Activated T-helper 1 cell treated with anti-CD3 and anti-CD28 coated beads, Interleukin-12 subunit alpha, Interleukin-12 subunit beta, Interleukin-2, Interleukin-4 antibody, amounts not matched to agents 30 ng/mL and 10 ng/mL and 1 ng/mL, durations not matched to agents 14 hours and 24 hours and 36 hours (primary cell): ENCODE measurements at regions of chr3 and their contacts with region 1.

Region 1: GRCh38 chr3:122258757-122259371 is 66.2 kb upstream of the CSTA start:
- DNase-seq: peak; percentile 47
- H3K4me3 Mint-ChIP-seq: no peak overlapping the region
- H3K27ac Mint-ChIP-seq: peak overlapping the region; percentile 35
- H3K4me1 Mint-ChIP-seq: peaks cover 22% of the 10 kb centered on the region
- H3K27me3 Mint-ChIP-seq: peaks cover 17% of the 10 kb centered on the region

Region 2: GRCh38 chr3:121654493-121655385 is 604.1 kb before region 1 on chr3:
- intact Hi-C with region 1: loop called (anchors 5 kb)
- DNase-seq: peak; percentile 9
- H3K4me3 Mint-ChIP-seq: peak overlapping the region; percentile 50
- H3K27ac Mint-ChIP-seq: peak overlapping the region; percentile 79
- H3K4me1 Mint-ChIP-seq: peaks cover 87% of the 10 kb centered on the region
- H3K27me3 Mint-ChIP-seq: no peaks in the 10 kb centered on the region

Region 3: GRCh38 chr3:121883507-121883906 is 375.4 kb before region 1 on chr3:
- intact Hi-C with region 1: loop called (anchors 1 kb)
- DNase-seq: no peak
- H3K4me3 Mint-ChIP-seq: no peak overlapping the region
- H3K27ac Mint-ChIP-seq: no peak overlapping the region
- H3K4me1 Mint-ChIP-seq: no peaks in the 10 kb centered on the region
- H3K27me3 Mint-ChIP-seq: no peaks in the 10 kb centered on the region

Region 4: GRCh38 chr3:122014741-122015140 is 244.1 kb before region 1 on chr3:
- intact Hi-C with region 1: loop called (anchors 5 kb)
- DNase-seq: no peak
- H3K4me3 Mint-ChIP-seq: no peak overlapping the region
- H3K27ac Mint-ChIP-seq: peak overlapping the region; percentile 21
- H3K4me1 Mint-ChIP-seq: peaks cover 40% of the 10 kb centered on the region
- H3K27me3 Mint-ChIP-seq: peaks cover 12% of the 10 kb centered on the region

Region 5: DNA sequence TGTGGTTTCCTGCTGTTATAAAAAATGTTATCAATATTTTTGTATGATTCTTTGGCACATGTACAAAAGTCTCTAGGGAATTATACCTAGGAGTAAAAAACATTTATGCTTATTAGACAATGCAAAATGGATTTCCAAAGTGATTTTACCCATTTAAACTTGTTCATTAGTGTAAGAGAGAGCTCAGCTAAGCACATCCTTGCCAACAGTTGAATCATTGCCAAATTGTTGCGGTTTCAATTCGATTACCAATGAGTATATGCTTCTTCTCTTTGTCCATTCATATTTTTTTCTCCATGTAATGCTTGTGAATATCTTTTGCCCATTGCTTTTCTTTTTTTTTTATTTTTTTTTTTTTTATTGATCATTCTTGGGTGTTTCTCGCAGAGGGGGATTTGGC is 58.2 kb before region 1 on chr3:
- intact Hi-C with region 1: no loop called
- DNase-seq: no peak
- H3K4me3 Mint-ChIP-seq: no peak overlapping the region
- H3K27ac Mint-ChIP-seq: no peak overlapping the region
- H3K4me1 Mint-ChIP-seq: no peaks in the 10 kb centered on the region
- H3K27me3 Mint-ChIP-seq: peaks cover 13% of the 10 kb centered on the region

Region 6: DNA sequence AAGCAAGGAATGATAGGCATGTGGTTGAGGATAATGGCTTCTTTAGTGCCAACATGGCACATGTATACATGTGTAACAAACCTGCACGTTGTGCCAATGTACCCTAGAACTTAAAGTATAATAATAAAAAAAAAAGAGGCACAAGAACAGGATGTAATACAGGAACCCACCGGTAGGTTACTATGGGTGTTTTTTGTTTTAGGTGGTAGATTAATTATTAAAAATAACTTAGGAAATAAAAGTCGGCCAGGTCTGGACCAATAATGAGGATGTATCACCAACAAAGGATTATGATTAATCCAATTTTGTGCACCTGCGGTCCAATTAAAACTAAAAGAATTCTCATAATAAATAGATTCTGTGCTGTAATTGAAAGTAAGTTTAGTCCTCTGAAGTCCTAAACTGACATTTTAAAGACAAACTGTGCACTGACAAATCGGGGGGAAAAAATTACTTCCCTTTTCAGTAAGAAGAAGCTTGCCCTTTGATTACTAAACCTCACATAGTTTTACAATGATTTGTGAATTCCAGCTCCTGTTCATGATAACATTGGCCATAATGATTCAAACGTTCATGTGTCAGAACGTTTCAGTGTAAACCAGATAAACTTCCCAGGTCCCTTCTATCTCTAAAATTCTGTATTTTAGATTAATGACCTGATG is 13.2 kb before region 1 on chr3:
- intact Hi-C with region 1: loop called (anchors 1 kb)
- DNase-seq: no peak
- H3K4me3 Mint-ChIP-seq: peak overlapping the region; percentile 63
- H3K27ac Mint-ChIP-seq: peak overlapping the region; percentile 36
- H3K4me1 Mint-ChIP-seq: peaks cover 14% of the 10 kb centered on the region
- H3K27me3 Mint-ChIP-seq: peaks cover 36% of the 10 kb centered on the region

Region 7: DNA sequence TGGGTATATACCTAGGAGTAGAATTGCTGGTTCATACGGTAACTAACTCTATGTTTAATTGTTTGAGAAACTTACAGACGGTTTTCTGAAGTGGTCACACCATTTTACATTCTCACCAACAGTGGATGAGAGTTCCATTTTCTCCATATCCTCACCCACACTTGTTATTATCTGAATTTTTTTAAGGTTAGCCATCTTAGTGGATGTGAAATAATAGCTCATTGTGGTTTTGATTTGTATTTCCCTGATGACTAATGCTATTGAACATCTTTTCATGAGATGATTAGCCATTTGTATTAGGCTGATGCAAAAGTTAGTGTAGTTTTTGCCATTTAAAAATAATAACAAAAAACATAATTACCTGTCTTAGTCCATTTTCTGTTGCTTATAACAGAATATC is 84.8 kb after region 1 on chr3:
- intact Hi-C with region 1: no loop called
- DNase-seq: no peak
- H3K4me3 Mint-ChIP-seq: no peak overlapping the region
- H3K27ac Mint-ChIP-seq: no peak overlapping the region
- H3K4me1 Mint-ChIP-seq: no peaks in the 10 kb centered on the region
- H3K27me3 Mint-ChIP-seq: peaks cover 9% of the 10 kb centered on the region

Region 8: GRCh38 chr3:122356415-122356814 is 97.6 kb after region 1 on chr3:
- intact Hi-C with region 1: loop called (anchors 5 kb)
- DNase-seq: peak; percentile 11
- H3K4me3 Mint-ChIP-seq: no peak overlapping the region
- H3K27ac Mint-ChIP-seq: no peak overlapping the region
- H3K4me1 Mint-ChIP-seq: peaks cover 14% of the 10 kb centered on the region
- H3K27me3 Mint-ChIP-seq: no peaks in the 10 kb centered on the region